Gastrocnemius medialis (tissue), 4 donors: ENCODE measurements at regions of chr6 and their contacts with region 1.

Region 1: GRCh38 chr6:25788305-25788922 is 33.9 kb downstream of the SLC17A4 start:
- DNase-seq: no peak
- ATAC-seq: peak in 1 of 2 donors; percentile 49
- H3K4me3 ChIP-seq: no peak overlapping the region
- H3K27ac ChIP-seq: no peak overlapping the region
- H3K4me1 ChIP-seq: no peaks in the 10 kb centered on the region
- H3K27me3 ChIP-seq: no peaks in the 10 kb centered on the region
- CTCF ChIP-seq: peak in 3 of 5 experiments; percentile 23 to 28 (median 24)
- POLR2A ChIP-seq: no peak

Region 2: DNA sequence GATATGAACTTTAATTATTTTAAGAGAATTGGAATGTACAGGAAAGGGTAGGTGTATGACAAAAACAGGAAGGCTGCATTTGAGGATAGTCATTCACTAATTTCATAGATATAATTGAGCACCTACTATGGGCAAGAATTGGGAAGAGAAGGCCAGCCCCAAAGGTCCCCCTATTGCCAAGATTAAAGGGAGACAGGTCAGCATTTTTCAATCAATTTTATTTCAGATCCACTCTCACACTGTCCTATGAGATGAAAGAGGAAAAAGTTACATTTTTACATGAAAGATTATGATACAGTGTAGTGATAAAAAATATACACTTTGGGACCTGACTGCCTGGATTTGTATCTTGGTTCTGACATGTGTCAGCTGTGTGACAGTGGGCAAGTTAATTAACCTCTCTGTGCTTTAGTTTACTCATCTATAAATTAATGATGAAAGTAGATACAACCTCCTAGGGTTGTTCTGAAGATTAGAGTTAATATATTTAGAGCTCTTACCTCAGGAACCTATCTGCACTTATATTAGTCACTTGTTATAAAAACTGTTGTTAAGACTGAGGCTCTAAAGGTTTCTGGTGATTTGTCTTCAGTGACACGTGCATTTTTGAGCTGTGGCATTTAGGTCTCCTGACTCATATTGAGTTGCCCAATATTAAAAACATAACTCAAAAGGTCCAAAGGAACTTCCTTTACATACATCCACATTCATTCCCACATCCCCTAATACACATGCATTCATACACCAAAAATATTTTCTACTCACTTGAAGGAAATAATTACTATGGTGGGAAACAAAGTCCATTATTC is 90.7 kb before region 1 on chr6:
- in situ Hi-C with region 1: no loop called
- intact Hi-C with region 1: no loop called
- DNase-seq: no peak
- ATAC-seq: no peak
- H3K4me3 ChIP-seq: no peak overlapping the region
- H3K27ac ChIP-seq: no peak overlapping the region
- H3K4me1 ChIP-seq: no peaks in the 10 kb centered on the region
- H3K27me3 ChIP-seq: no peaks in the 10 kb centered on the region
- CTCF ChIP-seq: no peak
- POLR2A ChIP-seq: no peak

Region 3: DNA sequence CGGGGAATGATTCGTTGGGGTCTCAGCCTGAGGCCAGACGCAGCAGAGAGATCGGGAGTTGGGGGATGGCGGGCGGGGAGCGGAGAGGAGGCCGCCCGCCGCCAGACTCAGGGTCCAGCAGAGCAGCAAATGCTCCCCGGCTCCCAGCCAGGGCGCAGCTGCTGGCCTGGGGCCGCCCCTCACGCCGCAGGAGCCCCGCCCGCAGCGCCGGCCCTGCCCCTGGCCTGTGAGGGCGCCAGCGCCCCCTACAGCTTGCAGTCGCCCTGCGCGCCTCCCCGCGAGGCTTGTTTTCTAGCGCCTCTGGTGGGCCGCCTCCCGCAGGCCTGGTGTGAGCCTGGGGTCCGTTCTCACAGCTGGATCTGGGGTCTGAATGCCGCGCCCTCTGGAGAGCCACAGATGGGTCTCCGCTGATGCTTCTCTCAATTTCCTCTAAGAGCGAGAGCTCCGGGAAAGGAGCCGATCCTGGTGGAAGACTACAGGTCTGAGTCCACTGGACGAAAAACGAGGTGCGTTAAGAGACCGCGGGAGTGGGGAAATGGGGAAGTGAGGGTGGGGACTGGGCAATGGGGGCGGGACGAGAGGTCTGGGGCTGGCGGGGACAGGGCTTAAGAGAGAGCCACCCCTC is 204.1 kb after region 1 on chr6:
- in situ Hi-C with region 1: no loop called
- intact Hi-C with region 1: loop called (anchors 1 kb)
- DNase-seq: peak; percentile 83 to 93
- ATAC-seq: peak; percentile 88 to 90
- H3K4me3 ChIP-seq: peak overlapping the region; percentile 63 to 74 (median 70)
- H3K27ac ChIP-seq: peak overlapping the region; percentile 83 to 95 (median 90)
- H3K4me1 ChIP-seq: peaks cover 4 to 6% of the 10 kb centered on the region in 2 donors
- H3K27me3 ChIP-seq: no peaks in the 10 kb centered on the region
- CTCF ChIP-seq: peak; percentile 90 to 100 (median 96)
- POLR2A ChIP-seq: peak; percentile 75 to 76